Activated CD4-positive, alpha-beta memory T cell treated with anti-CD3 and anti-CD28 coated beads for 36 hours (primary cell): ENCODE measurements at regions of chr17 and their contacts with region 1.

Region 1: GRCh38 chr17:61862975-61863800 is at the start of gene BRIP1:
- DNase-seq: peak; percentile 95
- H3K4me3 Mint-ChIP-seq: peak within 1 kb of the TSS; percentile 96
- H3K27ac Mint-ChIP-seq: peak within 1 kb of the TSS; percentile 89
- H3K4me1 Mint-ChIP-seq: peaks cover 28% of the 10 kb centered on the region
- H3K27me3 Mint-ChIP-seq: no peaks in the 10 kb centered on the region
- total RNA-seq, gene BRIP1: 14.1 to 15.8 TPM

Region 2: DNA sequence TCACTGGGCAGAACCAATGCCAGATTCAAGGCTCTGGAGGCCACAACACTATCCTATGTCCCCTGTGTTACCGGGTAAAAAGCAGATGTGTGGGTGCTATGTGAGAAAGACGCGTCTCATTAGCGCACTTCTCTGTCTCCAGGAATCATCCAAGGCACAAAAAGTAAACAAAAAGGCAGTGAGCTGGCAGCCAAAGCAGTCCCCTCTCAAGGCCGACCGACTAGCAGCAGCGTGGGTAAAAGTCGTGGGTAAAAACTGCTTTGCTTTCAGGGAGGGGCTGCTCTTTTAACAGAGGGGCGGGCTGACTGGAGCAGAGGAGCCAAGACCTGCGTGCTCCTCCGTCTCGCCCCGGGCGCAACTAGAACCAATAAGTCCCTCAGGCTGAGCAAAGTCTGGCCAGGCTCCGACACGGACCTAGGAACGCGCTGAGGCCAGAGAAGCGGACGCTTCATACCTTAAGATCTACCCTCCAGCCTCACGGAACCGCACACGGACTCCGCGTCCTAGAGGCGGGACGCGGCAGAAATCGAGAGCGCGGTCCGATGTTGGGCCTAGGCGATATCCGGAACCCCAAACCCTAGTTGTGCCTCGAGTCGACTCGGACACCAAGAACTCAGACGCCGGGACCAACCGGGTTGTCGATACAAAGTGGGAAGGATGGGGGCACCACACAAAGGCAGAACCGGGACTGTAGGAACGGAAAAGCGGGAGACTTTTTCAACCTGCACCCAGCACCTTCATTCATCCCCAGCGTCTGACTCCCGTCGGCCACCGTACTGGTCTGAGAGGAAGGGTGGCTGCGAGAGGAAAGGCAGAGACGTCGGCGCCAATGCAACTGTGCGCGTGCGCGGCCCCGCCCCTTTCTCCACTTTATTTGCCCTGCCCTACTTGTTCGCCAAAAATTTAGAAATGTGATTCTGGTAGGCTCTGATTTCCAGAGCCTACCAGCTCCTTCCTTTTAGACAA is 64.3 kb after region 1 on chr17 and contains the start of gene INTS2:
- CTCF ChIA-PET with region 1: no interaction called
- POLR2A ChIA-PET with region 1: interaction called, 3 read pairs
- intact Hi-C with region 1: loop called (anchors 1 kb)
- DNase-seq: peak; percentile 97
- H3K4me3 Mint-ChIP-seq: peak within 1 kb of the TSS; percentile 90
- H3K27ac Mint-ChIP-seq: peak within 1 kb of the TSS; percentile 92
- H3K4me1 Mint-ChIP-seq: peaks cover 20% of the 10 kb centered on the region
- H3K27me3 Mint-ChIP-seq: no peaks in the 10 kb centered on the region
- total RNA-seq, gene INTS2: 23.0 to 27.4 TPM